ENCODE measurements at regions of chr19 and their contacts with region 1.

Region 1: DNA sequence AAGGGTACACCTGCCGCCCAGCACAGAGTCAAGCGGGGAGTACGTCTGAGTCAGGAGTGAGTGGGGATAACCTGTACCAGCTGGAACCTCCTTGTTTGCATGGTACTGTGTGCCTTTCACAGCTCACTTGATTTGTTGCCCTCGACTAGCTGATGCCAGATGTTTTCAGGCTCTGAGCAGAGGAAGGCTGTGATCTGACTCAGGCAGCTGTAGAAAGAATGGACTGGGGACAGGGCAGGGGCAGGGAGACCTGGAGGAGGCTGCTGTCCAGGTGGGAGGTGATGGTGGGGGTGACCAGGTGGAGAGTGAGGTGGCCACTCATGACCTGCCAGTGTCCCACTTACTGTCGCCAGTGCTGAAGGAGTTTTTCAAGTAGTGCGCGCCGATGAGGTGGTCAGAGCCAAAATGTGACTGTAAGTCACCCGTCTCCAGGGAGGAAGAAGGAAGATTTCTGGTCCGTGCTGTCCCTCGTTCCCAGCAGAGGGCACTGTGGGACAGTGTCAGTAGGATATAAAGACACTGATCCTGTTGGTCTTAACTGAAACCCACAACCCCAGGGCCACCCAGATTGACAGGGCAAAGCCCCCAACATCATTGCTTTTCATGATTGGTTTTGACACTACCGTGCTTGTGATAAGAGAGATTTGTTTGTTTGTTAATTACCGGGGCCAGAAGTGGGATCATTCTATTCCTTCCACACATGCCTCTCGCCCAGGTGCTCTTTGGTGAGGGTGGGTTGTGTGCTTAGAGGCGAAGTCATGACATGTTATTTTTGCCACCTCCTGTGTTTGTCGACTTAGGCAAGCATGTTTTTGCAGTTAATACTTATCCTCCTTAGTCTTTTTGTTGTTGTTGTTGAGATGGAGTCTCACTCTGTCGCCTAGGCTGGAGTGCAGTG is 128.4 kb downstream of the DPF1 start:
- DNase-seq: no peak

Region 2: GRCh38 chr19:37906869-37907734 is 188.6 kb before region 1 on chr19 and contains the start of gene SIPA1L3:
- intact Hi-C with region 1: loop called (anchors 2 kb)
- DNase-seq: peak; percentile 97
- total RNA-seq, gene SIPA1L3: 14.0 TPM

Region 3: GRCh38 chr19:38004521-38005223 is 91.0 kb before region 1 on chr19:
- intact Hi-C with region 1: loop called (anchors 5 kb)
- DNase-seq: peak; percentile 85

Region 4: DNA sequence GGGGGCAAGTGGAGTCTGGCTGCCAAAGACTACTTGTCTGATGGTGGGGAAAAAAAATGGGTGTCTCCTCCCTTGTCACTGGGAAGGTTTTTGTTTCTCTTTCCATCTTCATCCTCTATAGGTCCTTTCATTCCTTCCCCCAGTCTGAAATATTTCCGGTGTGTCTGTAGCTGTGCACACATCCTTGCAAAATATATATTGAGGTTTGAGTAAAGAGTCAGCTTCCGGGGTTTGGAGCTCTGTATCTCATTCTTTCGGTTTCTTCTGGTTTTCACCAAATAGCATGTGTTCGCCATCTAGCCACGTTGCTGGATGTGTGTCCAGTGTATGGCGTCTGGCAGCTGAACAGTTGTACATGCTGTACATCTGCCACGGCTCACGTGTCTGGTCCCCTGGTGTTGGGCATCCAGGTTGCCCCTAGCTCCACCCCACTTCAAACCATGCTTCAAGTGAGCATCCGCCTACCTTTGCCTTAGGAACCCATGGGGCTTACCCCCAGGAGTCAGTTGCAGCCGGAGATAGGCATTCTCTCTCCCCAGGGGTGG is 46.5 kb before region 1 on chr19:
- intact Hi-C with region 1: no loop called
- DNase-seq: no peak

Measured in cardiac septum (tissue), 1 donor.